Activated CD8-positive, alpha-beta T cell treated with anti-CD3 and anti-CD28 coated beads, Interleukin-2, amount 10 ng/mL, durations not matched to agents 7 days and 5 days (primary cell): ENCODE measurements at regions of chr14 and their contacts with region 1.

Region 1: GRCh38 chr14:106831322-106831720 is 1304.9 kb downstream of the TMEM121 start:
- DNase-seq: peak; percentile 70
- ATAC-seq: peak; percentile 48
- H3K4me3 Mint-ChIP-seq: no peak overlapping the region
- H3K27ac Mint-ChIP-seq: no peak overlapping the region
- H3K4me1 Mint-ChIP-seq: no peaks in the 10 kb centered on the region
- H3K27me3 Mint-ChIP-seq: peaks cover 39% of the 10 kb centered on the region

Region 2: GRCh38 chr14:106729551-106729950 is 101.8 kb before region 1 on chr14:
- CTCF ChIA-PET with region 1: no interaction called
- POLR2A ChIA-PET with region 1: no interaction called
- DNase-seq: no peak
- ATAC-seq: no peak
- H3K4me3 Mint-ChIP-seq: no peak overlapping the region
- H3K27ac Mint-ChIP-seq: no peak overlapping the region
- H3K4me1 Mint-ChIP-seq: peaks cover 30% of the 10 kb centered on the region
- H3K27me3 Mint-ChIP-seq: peaks cover 29% of the 10 kb centered on the region

Region 3: GRCh38 chr14:106776395-106776983 is 54.8 kb before region 1 on chr14:
- CTCF ChIA-PET with region 1: interaction called, 12 read pairs
- POLR2A ChIA-PET with region 1: no interaction called
- DNase-seq: no peak
- ATAC-seq: no peak
- H3K4me3 Mint-ChIP-seq: no peak overlapping the region
- H3K27ac Mint-ChIP-seq: no peak overlapping the region
- H3K4me1 Mint-ChIP-seq: peaks cover 17% of the 10 kb centered on the region
- H3K27me3 Mint-ChIP-seq: peaks cover 5% of the 10 kb centered on the region

Region 4: DNA sequence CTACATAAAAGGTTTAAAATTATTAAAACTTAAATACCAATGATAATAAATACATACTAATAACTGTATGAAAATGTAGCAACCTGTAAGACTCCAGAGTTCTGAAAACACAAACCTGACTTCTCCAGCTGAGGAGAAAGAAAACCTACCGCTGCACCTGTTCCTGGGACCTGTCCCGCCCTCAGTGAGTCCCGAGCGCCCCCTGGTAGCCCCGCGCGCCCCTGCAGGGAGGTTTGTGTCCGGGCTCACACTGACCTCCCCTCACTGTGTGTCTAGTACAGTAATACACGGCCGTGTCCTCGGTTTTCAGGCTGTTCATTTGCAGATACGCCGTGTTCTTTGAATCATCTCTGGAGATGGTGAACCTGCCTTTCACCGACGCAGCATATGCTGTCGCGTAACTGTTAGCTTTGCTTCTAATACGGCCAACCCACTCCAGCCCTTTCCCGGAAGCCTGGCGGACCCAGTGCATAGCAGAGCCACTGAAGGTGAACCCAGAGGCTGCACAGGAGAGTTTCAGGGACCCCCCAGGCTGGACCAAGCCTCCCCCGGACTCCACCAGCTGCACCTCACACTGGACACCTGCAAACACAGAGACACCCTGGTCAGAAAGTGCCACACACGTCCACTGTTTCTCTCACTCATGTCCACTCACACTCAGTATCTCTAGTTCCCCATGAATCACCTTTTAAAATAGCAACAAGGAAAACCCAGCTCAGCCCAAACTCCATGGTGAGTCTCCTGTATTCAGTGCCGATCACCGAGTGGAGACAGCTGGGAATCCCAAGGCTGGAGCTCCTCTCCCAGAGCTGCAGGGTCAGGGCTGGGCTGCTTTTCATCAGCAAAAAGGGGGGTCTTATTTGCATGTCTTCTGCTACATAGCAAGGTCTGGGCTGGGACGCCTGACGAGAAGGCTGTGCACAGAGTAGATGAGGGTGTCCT is 28.6 kb before region 1 on chr14:
- CTCF ChIA-PET with region 1: interaction called, 20 read pairs
- POLR2A ChIA-PET with region 1: no interaction called
- DNase-seq: no peak
- ATAC-seq: no peak
- H3K4me3 Mint-ChIP-seq: no peak overlapping the region
- H3K27ac Mint-ChIP-seq: no peak overlapping the region
- H3K4me1 Mint-ChIP-seq: no peaks in the 10 kb centered on the region
- H3K27me3 Mint-ChIP-seq: peaks cover 65% of the 10 kb centered on the region

Region 5: DNA sequence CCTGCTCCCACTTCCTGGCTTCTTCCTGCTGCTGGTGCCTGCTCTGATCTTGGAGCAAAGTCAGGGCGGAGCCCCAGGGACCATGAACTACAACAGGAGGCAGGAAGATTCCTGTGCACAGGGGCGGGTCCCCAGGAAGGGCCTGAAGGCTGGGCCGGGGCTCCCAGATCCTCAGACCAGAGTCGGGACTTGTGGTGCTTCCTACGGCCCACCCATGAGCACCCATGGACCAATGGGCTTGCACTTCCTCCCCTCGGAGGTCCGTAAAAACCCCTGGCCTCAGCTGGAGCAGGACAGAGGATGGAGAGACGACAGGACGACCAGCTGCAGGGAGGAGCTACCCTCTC is 17.9 kb before region 1 on chr14:
- CTCF ChIA-PET with region 1: interaction called, 30 read pairs
- POLR2A ChIA-PET with region 1: no interaction called
- DNase-seq: no peak
- ATAC-seq: no peak
- H3K4me3 Mint-ChIP-seq: no peak overlapping the region
- H3K27ac Mint-ChIP-seq: no peak overlapping the region
- H3K4me1 Mint-ChIP-seq: peaks cover 22% of the 10 kb centered on the region
- H3K27me3 Mint-ChIP-seq: peaks cover 17% of the 10 kb centered on the region

Region 6: DNA sequence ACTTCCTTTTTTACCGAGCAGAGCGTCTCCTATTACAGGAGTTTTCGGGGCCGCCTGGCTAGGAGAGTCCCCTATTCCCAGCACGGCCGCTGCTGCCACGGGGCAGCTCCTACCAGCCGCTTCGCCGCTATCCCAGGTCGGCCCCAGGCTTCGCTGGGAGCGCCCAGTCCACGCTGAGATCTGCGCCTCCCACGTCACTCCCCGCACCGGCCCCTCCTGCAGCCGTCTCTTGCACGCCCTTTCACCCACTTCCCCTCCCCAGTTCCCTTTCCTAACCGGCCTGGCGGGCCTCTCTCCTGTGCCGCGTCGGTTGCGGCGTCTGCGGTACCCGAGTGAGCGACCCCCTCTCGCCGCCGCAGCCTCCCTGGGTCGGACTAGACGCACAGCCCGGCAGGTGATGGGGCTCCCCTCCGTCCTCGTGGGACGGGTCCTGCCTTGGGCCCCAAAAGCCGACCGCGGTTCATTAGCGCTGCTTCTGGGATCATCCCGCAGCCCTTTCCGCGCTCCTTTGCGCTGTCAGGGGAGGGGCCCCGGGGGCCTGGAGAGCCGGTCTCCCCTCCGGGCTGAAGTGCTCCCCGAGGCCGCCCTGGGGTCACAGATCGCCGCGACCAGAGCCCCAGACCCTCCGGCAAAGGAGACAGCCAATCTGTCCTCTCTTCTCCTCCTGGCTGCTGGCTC is 13.4 kb after region 1 on chr14:
- CTCF ChIA-PET with region 1: interaction called, 110 read pairs
- POLR2A ChIA-PET with region 1: no interaction called
- DNase-seq: peak; percentile 70
- ATAC-seq: peak; percentile 77
- H3K4me3 Mint-ChIP-seq: peak overlapping the region; percentile 89
- H3K27ac Mint-ChIP-seq: peak overlapping the region; percentile 86
- H3K4me1 Mint-ChIP-seq: peaks cover 35% of the 10 kb centered on the region
- H3K27me3 Mint-ChIP-seq: peaks cover 9% of the 10 kb centered on the region

Region 7: DNA sequence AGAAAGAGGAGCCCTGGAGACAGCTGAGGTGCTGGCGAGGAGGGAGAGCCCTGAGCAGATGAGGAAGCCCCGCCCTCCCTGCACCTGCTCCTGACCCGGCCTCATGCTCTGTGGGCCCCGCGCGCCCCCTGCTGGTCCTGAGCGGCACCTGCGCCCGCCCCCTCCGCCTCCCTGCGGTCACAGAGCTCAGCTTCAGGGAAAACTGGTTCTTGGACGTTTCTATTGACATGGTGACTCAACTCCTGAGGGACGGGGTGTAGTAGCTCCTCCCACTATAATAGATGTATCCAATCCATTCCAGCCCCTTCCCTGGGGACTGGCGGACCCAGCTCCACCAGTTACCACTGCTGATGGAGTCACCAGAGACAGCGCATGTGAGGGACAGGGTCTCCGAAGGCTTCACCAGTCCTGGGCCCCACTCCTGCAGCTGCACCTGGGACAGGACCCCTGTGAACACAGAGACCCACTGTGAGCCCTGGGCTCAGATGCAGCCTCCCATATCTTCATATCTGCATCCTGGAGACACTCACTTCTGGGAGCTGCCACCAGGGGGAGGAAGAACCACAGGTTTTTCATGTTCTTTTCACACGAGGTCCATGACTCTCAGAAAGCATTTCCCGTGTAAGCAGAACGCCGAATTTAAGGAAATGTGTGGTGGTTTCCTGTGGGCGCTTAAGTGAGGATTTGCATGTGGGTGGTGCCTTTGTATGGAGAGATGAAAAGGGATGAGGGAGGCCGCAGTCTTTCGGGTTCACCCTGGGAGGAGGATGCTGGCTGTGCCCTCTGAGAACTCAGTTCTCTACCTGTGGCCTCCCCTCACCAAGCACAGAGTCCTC is 41.5 kb after region 1 on chr14:
- CTCF ChIA-PET with region 1: interaction called, 193 read pairs
- POLR2A ChIA-PET with region 1: interaction called, 3 read pairs
- DNase-seq: peak; percentile 88
- ATAC-seq: peak; percentile 86
- H3K4me3 Mint-ChIP-seq: peak overlapping the region; percentile 21
- H3K27ac Mint-ChIP-seq: no peak overlapping the region
- H3K4me1 Mint-ChIP-seq: peaks cover 29% of the 10 kb centered on the region
- H3K27me3 Mint-ChIP-seq: peaks cover 19% of the 10 kb centered on the region